CD4-positive, alpha-beta memory T cell (primary cell): ENCODE measurements at regions of chr5 and their contacts with region 1.

Region 1: DNA sequence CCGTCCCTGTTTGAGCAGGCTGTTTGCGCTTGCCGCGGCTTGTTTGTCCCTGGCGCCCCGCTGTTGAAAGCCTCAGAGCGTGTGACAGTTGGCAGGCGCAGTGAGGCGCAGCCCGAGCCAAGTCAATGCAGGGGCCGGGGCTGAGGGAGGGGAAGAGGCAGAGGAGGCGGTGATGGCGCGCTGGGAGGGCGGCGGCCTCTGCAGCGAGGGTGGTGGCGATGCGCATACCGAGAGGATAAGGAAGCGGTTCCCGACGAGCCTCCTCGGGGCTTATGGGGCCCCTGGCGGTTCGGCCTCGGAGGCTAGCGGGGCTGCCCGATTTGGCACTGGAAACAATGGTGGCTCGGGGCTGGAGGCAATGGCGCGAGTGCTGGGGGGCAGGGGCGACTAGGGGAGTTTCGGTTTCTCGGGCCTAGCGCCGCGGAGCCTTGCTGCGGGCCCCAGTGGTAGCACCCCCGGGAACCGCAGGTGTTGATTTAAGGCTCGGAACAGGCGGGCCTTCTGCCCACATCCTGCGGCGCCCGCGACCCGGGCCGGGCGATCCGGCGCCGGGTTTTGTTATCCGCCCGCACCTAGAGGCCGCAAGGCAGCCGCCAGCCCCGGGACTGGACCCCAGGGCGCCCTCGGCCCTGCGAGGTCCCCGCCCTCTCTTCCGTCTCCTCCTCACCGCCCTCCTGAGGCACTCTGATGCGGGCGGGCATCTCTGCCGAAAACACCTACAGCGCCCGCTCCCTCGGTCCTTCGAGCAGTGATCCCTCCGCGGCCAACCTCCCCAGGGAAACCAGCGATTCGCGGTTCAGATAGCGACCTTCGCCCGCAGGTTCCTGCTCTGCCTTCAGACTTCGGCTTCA is 947 bp upstream of the LNPEP start:
- DNase-seq: peak; percentile 95 to 98 (median 98)
- H3K4me3 ChIP-seq: peak overlapping the region; percentile 60 to 97
- H3K4me3 Mint-ChIP-seq: peak overlapping the region; percentile 88 to 99 (median 94)
- H3K27ac ChIP-seq: peak overlapping the region; percentile 83
- H3K27ac Mint-ChIP-seq: peak overlapping the region; percentile 93 to 99 (median 97)
- H3K4me1 ChIP-seq: peaks cover 72% of the 10 kb centered on the region
- H3K4me1 Mint-ChIP-seq: peaks cover 43 to 82% (median 61%) of the 10 kb centered on the region in 4 donors
- H3K27me3 ChIP-seq: no peaks in the 10 kb centered on the region
- H3K27me3 Mint-ChIP-seq: no peaks in the 10 kb centered on the region

Region 2: GRCh38 chr5:95730730-95731570 is 1204.0 kb before region 1 on chr5 and contains the start of gene RHOBTB3:
- CTCF ChIA-PET with region 1: no interaction called
- POLR2A ChIA-PET with region 1: no interaction called
- intact Hi-C with region 1: loop called (anchors 10 kb)
- DNase-seq: peak; percentile 23 to 50 (median 33)
- H3K4me3 ChIP-seq: peak within 1 kb of the TSS; percentile 7 to 46
- H3K4me3 Mint-ChIP-seq: peak within 1 kb of the TSS; percentile 79 to 87 (median 84)
- H3K27ac ChIP-seq: no peak within 1 kb of the TSS
- H3K27ac Mint-ChIP-seq: peak within 1 kb of the TSS in 1 of 7 donors; percentile 3
- H3K4me1 ChIP-seq: peaks cover 17% of the 10 kb centered on the region
- H3K4me1 Mint-ChIP-seq: peaks cover 1 to 25% (median 19%) of the 10 kb centered on the region in 4 donors
- H3K27me3 ChIP-seq: peaks cover 17% of the 10 kb centered on the region
- H3K27me3 Mint-ChIP-seq: peaks cover 31 to 36% of the 10 kb centered on the region in 2 donors
- total RNA-seq, gene RHOBTB3: 0.32 to 0.61 TPM

Region 3: GRCh38 chr5:96816411-96816939 is 118.5 kb before region 1 on chr5:
- CTCF ChIA-PET with region 1: no interaction called
- POLR2A ChIA-PET with region 1: interaction called, 13 read pairs
- intact Hi-C with region 1: loop called (anchors 1 kb)
- DNase-seq: peak; percentile 85 to 92 (median 89)
- H3K4me3 ChIP-seq: peak overlapping the region; percentile 24 to 64
- H3K4me3 Mint-ChIP-seq: peak overlapping the region; percentile 80 to 96 (median 90)
- H3K27ac ChIP-seq: peak overlapping the region; percentile 76
- H3K27ac Mint-ChIP-seq: peak overlapping the region; percentile 88 to 99 (median 97)
- H3K4me1 ChIP-seq: peaks cover 56% of the 10 kb centered on the region
- H3K4me1 Mint-ChIP-seq: peaks cover 51 to 76% (median 64%) of the 10 kb centered on the region in 4 donors
- H3K27me3 ChIP-seq: no peaks in the 10 kb centered on the region
- H3K27me3 Mint-ChIP-seq: no peaks in the 10 kb centered on the region

Region 4: GRCh38 chr5:96896806-96897205 is 38.1 kb before region 1 on chr5:
- CTCF ChIA-PET with region 1: interaction called, 4 read pairs
- POLR2A ChIA-PET with region 1: interaction called, 21 read pairs
- intact Hi-C with region 1: loop called (anchors 1 kb)
- DNase-seq: no peak
- H3K4me3 ChIP-seq: no peak overlapping the region
- H3K4me3 Mint-ChIP-seq: peak overlapping the region; percentile 56 to 90 (median 80)
- H3K27ac ChIP-seq: peak overlapping the region; percentile 56
- H3K27ac Mint-ChIP-seq: peak overlapping the region; percentile 82 to 97 (median 92)
- H3K4me1 ChIP-seq: peaks cover 37% of the 10 kb centered on the region
- H3K4me1 Mint-ChIP-seq: peaks cover 26 to 55% (median 42%) of the 10 kb centered on the region in 4 donors
- H3K27me3 ChIP-seq: no peaks in the 10 kb centered on the region
- H3K27me3 Mint-ChIP-seq: no peaks in the 10 kb centered on the region

Region 5: DNA sequence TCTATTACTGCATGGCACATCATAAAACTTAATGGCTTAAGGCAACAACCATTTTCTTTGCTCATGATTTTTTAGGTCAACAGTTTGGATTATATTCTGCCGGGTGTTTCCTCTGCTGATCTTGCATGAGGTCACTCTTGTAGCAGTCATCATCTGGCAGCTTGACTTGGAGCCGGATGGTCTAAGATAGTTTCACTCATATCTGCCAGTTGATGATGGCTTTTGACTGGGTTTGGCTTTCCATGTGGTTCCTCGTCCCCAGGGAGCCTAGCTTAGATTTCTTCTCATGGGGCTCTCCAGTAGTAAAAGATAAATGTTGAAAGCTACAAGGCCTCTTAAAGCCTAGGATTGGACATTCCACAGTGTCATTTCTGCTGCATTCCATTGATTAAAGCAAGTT is 28.3 kb after region 1 on chr5:
- CTCF ChIA-PET with region 1: interaction called, 7 read pairs
- POLR2A ChIA-PET with region 1: interaction called, 110 read pairs
- intact Hi-C with region 1: loop called (anchors 1 kb)
- DNase-seq: peak in 2 of 5 donors; percentile 19 to 44
- H3K4me3 ChIP-seq: peak overlapping the region in 1 of 2 donors; percentile 29
- H3K4me3 Mint-ChIP-seq: peak overlapping the region; percentile 33 to 89 (median 80)
- H3K27ac ChIP-seq: peak overlapping the region; percentile 45
- H3K27ac Mint-ChIP-seq: peak overlapping the region; percentile 83 to 97 (median 95)
- H3K4me1 ChIP-seq: peaks cover 88% of the 10 kb centered on the region
- H3K4me1 Mint-ChIP-seq: peaks cover 53 to 89% (median 71%) of the 10 kb centered on the region in 4 donors
- H3K27me3 ChIP-seq: no peaks in the 10 kb centered on the region
- H3K27me3 Mint-ChIP-seq: no peaks in the 10 kb centered on the region

Region 6: GRCh38 chr5:97162045-97162444 is 227.1 kb after region 1 on chr5:
- CTCF ChIA-PET with region 1: no interaction called
- POLR2A ChIA-PET with region 1: no interaction called
- intact Hi-C with region 1: loop called (anchors 2 kb)
- DNase-seq: peak; percentile 44 to 61 (median 59)
- H3K4me3 ChIP-seq: no peak overlapping the region
- H3K4me3 Mint-ChIP-seq: no peak overlapping the region
- H3K27ac ChIP-seq: no peak overlapping the region
- H3K27ac Mint-ChIP-seq: peak overlapping the region in 4 of 7 donors; percentile 18 to 83 (median 45)
- H3K4me1 ChIP-seq: peaks cover 3% of the 10 kb centered on the region
- H3K4me1 Mint-ChIP-seq: peaks cover 3 to 18% (median 6%) of the 10 kb centered on the region in 4 donors
- H3K27me3 ChIP-seq: no peaks in the 10 kb centered on the region
- H3K27me3 Mint-ChIP-seq: no peaks in the 10 kb centered on the region